A673 (cell line): ENCODE measurements at regions of chr2 and their contacts with region 1.

Region 1: DNA sequence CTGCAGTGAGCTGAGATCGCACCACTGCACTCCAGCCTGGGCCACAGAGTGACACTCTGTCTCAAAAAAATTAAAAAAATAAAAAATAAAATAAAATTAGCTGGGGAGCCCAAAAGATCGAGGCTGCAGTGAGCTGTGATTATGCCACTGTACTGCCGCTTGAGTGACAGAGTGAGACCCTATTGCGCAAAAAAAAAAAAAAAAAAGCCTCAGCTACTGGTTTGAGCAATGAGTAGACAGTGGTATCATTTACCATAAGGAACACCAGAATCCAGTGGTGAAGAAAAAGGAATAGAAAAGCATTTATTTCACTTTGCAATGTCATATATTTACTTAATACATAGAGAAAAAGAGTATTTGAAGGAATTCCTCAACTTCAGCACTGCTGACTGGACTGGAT is 3.0 kb downstream of the SAP130 start:
- DNase-seq: no peak
- H3K4me3 ChIP-seq: no peak overlapping the region
- H3K27ac ChIP-seq: no peak overlapping the region
- H3K4me1 ChIP-seq: peaks cover 6% of the 10 kb centered on the region
- H3K27me3 ChIP-seq: no peaks in the 10 kb centered on the region
- CTCF ChIP-seq: no peak

Region 2: DNA sequence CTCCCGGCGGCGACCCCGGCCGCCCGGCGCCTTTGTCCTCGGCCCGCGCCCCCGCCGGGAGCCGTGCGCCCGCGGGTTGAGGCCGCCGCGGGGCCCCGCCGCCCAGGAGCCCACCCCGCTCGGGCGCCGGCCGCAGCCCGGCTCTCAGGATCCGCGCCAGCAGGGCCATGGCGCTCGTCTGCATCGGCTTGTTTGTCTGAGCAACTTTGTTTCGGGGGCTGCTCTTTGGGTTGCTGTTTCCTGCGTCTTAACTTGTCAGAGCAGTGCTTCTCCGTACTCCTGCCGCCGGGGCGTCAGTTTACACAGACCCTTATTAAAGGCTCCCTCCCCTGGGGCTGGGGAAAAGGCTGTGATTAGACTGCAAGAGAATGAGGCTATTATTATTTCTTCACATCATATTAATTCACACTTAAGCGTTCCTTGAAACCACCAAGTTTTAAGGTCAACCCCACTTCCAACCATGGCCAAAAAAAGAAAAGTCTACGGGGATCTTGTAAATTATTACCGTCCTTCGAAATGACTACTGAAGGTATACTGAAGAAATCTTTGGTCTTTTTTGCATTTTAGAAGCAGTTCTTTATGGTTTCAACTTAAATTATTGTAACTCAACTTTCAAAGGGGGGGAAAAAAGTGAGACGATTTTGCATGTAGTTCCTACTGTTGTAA is 804.6 kb before region 1 on chr2 and contains the start of gene CYP27C1:
- CTCF ChIA-PET with region 1: interaction called, 10 read pairs
- POLR2A ChIA-PET with region 1: no interaction called
- intact Hi-C with region 1: no loop called
- DNase-seq: peak; percentile 58
- H3K4me3 ChIP-seq: peak within 1 kb of the TSS; percentile 88
- H3K27ac ChIP-seq: peak within 1 kb of the TSS; percentile 59
- H3K4me1 ChIP-seq: peaks cover 15% of the 10 kb centered on the region
- H3K27me3 ChIP-seq: no peaks in the 10 kb centered on the region
- CTCF ChIP-seq: no peak
- total RNA-seq, gene CYP27C1: 3.0 and 4.2 TPM in 2 replicates

Region 3: GRCh38 chr2:127563458-127564428 is 461.1 kb before region 1 on chr2:
- CTCF ChIA-PET with region 1: no interaction called
- POLR2A ChIA-PET with region 1: no interaction called
- intact Hi-C with region 1: no loop called
- DNase-seq: no peak
- H3K4me3 ChIP-seq: no peak overlapping the region
- H3K27ac ChIP-seq: no peak overlapping the region
- H3K4me1 ChIP-seq: no peaks in the 10 kb centered on the region
- H3K27me3 ChIP-seq: no peaks in the 10 kb centered on the region
- CTCF ChIP-seq: no peak